Breast epithelium (tissue), 4 donors: ENCODE measurements at regions of chr19 and their contacts with region 1.

Region 1: GRCh38 chr19:20661150-20661819 is at the start of gene ZNF626:
- DNase-seq: peak; percentile 97 to 98
- H3K4me3 ChIP-seq: peak within 1 kb of the TSS; percentile 64 to 91 (median 77)
- H3K27ac ChIP-seq: peak within 1 kb of the TSS; percentile 90 to 91
- H3K4me1 ChIP-seq: peaks cover 0 to 3% of the 10 kb centered on the region in 2 donors
- H3K27me3 ChIP-seq: no peaks in the 10 kb centered on the region
- CTCF ChIP-seq: no peak
- POLR2A ChIP-seq: peak; percentile 79
- total RNA-seq, gene ZNF626: 14.7 to 40.0 (median 21.0) TPM

Region 2: GRCh38 chr19:18814063-18814462 is 1847.2 kb before region 1 on chr19:
- intact Hi-C with region 1: loop called (anchors 10 kb)
- DNase-seq: no peak
- H3K4me3 ChIP-seq: no peak overlapping the region
- H3K27ac ChIP-seq: no peak overlapping the region
- H3K4me1 ChIP-seq: no peaks in the 10 kb centered on the region
- H3K27me3 ChIP-seq: no peaks in the 10 kb centered on the region
- CTCF ChIP-seq: no peak
- POLR2A ChIP-seq: no peak